A673 (cell line): ENCODE measurements at regions of chr11 and their contacts with region 1.

Region 1: GRCh38 chr11:30143098-30143705 is 87.6 kb upstream of the FSHB start:
- DNase-seq: peak; percentile 86
- H3K4me3 ChIP-seq: no peak overlapping the region
- H3K27ac ChIP-seq: no peak overlapping the region
- H3K4me1 ChIP-seq: no peaks in the 10 kb centered on the region
- H3K27me3 ChIP-seq: no peaks in the 10 kb centered on the region
- CTCF ChIP-seq: peak; percentile 99

Region 2: DNA sequence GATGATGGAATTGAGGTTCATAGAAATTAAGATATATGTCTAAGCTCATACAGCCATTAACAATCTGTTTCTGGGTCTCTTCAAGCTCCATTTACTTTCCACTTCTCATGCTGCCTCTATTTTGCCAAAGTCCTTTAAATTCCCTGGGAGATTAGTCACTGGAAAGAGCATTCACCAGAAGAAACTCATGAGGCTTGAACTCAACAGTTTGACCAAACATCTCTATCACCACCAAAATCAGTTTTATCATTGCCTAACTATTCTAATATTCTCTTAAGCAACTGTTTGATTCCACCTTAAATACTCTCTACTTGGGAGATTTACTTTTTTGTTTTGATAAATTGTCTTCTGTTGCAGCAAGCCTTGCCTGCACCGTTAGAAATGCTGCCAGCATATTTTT is 1007.7 kb before region 1 on chr11:
- CTCF ChIA-PET with region 1: no interaction called
- POLR2A ChIA-PET with region 1: no interaction called
- intact Hi-C with region 1: no loop called
- DNase-seq: no peak
- H3K4me3 ChIP-seq: no peak overlapping the region
- H3K27ac ChIP-seq: no peak overlapping the region
- H3K4me1 ChIP-seq: peaks cover under 1% of the 10 kb centered on the region
- H3K27me3 ChIP-seq: no peaks in the 10 kb centered on the region
- CTCF ChIP-seq: no peak

Region 3: GRCh38 chr11:29343465-29344333 is 799.5 kb before region 1 on chr11:
- CTCF ChIA-PET with region 1: no interaction called
- POLR2A ChIA-PET with region 1: no interaction called
- intact Hi-C with region 1: loop called (anchors 2 kb)
- DNase-seq: peak; percentile 89
- H3K4me3 ChIP-seq: peak overlapping the region; percentile 16
- H3K27ac ChIP-seq: no peak overlapping the region
- H3K4me1 ChIP-seq: no peaks in the 10 kb centered on the region
- H3K27me3 ChIP-seq: peaks cover 54% of the 10 kb centered on the region
- CTCF ChIP-seq: peak; percentile 100

Region 4: DNA sequence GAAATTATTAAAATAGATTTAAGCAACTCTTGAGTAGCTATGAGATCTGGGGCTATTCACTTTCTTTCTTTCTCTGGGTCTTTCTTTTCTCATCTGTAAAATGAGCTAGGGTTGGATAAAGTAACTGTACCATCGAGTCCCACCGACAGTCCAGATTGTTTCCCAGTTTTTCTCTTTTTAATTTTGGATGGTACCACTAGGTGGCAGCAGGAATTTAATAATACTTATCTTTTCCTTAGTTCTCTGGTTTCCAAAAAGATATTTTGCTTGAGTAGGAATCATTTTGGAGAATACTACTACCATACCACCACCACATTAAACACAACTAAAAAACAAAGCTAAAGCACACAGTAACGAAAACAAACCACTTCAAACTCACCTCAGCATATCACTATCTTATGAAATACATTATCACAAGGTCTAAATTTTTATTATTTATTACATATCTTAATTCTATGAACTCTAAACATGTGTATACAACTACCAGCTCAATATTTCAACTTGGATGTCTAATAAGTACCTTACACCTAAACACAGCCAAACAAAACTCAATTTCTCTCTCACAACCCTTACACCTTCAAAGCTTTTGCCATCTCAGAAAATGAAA is 710.4 kb before region 1 on chr11:
- CTCF ChIA-PET with region 1: interaction called, 7 read pairs
- POLR2A ChIA-PET with region 1: no interaction called
- intact Hi-C with region 1: loop called (anchors 1 kb)
- DNase-seq: peak; percentile 81
- H3K4me3 ChIP-seq: no peak overlapping the region
- H3K27ac ChIP-seq: no peak overlapping the region
- H3K4me1 ChIP-seq: no peaks in the 10 kb centered on the region
- H3K27me3 ChIP-seq: peaks cover 10% of the 10 kb centered on the region
- CTCF ChIP-seq: peak; percentile 92

Region 5: GRCh38 chr11:29448246-29448877 is 694.8 kb before region 1 on chr11:
- CTCF ChIA-PET with region 1: interaction called, 12 read pairs
- POLR2A ChIA-PET with region 1: no interaction called
- intact Hi-C with region 1: no loop called
- DNase-seq: peak; percentile 44
- H3K4me3 ChIP-seq: no peak overlapping the region
- H3K27ac ChIP-seq: no peak overlapping the region
- H3K4me1 ChIP-seq: no peaks in the 10 kb centered on the region
- H3K27me3 ChIP-seq: peaks cover 5% of the 10 kb centered on the region
- CTCF ChIP-seq: peak; percentile 56

Region 6: GRCh38 chr11:30106222-30106621 is 37.0 kb before region 1 on chr11:
- CTCF ChIA-PET with region 1: no interaction called
- POLR2A ChIA-PET with region 1: no interaction called
- intact Hi-C with region 1: no loop called
- DNase-seq: no peak
- H3K4me3 ChIP-seq: no peak overlapping the region
- H3K27ac ChIP-seq: no peak overlapping the region
- H3K4me1 ChIP-seq: no peaks in the 10 kb centered on the region
- H3K27me3 ChIP-seq: no peaks in the 10 kb centered on the region
- CTCF ChIP-seq: no peak

Region 7: DNA sequence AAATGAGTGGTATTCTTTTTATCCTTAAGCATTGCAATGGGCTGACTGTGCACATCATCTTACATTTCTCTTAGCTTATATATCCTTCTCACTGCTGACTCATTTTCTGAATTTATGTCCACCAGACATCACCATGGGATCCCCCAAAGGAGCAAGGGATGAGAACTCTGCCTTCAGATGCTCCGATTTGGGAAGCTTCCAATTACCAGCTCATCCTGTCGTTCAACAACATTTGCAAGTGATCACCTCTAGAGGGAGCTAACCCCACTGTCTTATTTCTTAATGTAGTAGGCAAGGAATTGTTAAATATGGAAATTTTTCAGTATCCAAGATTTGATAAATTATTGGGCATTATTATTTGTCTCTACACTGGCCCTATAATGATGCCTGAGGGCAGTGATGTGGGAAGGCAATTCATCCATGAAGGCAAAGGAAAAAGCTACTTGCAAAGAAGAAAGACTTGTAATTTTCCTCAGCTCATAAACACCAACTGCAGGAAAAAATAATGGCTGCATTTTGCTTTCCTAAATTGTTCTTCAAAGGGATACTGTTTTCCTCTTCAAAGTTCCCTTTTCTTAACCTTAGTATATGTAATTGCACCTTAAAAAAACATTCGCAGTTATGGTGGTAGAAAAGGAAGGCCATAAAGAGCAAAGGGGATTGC is 14.8 kb before region 1 on chr11:
- CTCF ChIA-PET with region 1: interaction called, 30 read pairs
- POLR2A ChIA-PET with region 1: no interaction called
- intact Hi-C with region 1: no loop called
- DNase-seq: peak; percentile 78
- H3K4me3 ChIP-seq: no peak overlapping the region
- H3K27ac ChIP-seq: no peak overlapping the region
- H3K4me1 ChIP-seq: no peaks in the 10 kb centered on the region
- H3K27me3 ChIP-seq: no peaks in the 10 kb centered on the region
- CTCF ChIP-seq: peak; percentile 99

Region 8: GRCh38 chr11:30270671-30271070 is 127.5 kb after region 1 on chr11:
- CTCF ChIA-PET with region 1: no interaction called
- POLR2A ChIA-PET with region 1: no interaction called
- intact Hi-C with region 1: no loop called
- DNase-seq: no peak
- H3K4me3 ChIP-seq: no peak overlapping the region
- H3K27ac ChIP-seq: no peak overlapping the region
- H3K4me1 ChIP-seq: no peaks in the 10 kb centered on the region
- H3K27me3 ChIP-seq: peaks cover 25% of the 10 kb centered on the region
- CTCF ChIP-seq: no peak